H1 (cell line): ENCODE measurements at regions of chr7 and their contacts with region 1.

Region 1: GRCh38 chr7:101153969-101154692 is at the start of gene AP1S1:
- DNase-seq: peak; percentile 98
- H3K4me3 ChIP-seq: peak within 1 kb of the TSS; percentile 48 to 82 (median 66)
- H3K27ac ChIP-seq: peak within 1 kb of the TSS; percentile 16; the same call in 1 of the 2 replicates
- H3K4me1 ChIP-seq: peaks cover 8 to 19% (median 14%) of the 10 kb centered on the region in 4 experiments
- H3K27me3 ChIP-seq: peaks cover 0 to 6% (median 4%) of the 10 kb centered on the region in 4 experiments; a peak in 3 of 7 replicates
- CTCF ChIP-seq: no peak
- EP300 ChIP-seq: no peak
- POLR2A ChIP-seq: no peak
- RAD21 ChIP-seq: no peak
- total RNA-seq, gene AP1S1: 56.0 and 56.1 TPM in 2 replicates

Region 2: GRCh38 chr7:101165075-101165957 is 11.2 kb after region 1 on chr7 and contains the start of gene VGF:
- CTCF ChIA-PET with region 1: interaction called, 38 read pairs
- POLR2A ChIA-PET with region 1: interaction called, 20 read pairs
- DNase-seq: peak; percentile 93 to 98
- H3K4me3 ChIP-seq: peak within 1 kb of the TSS; percentile 46 to 74 (median 55)
- H3K27ac ChIP-seq: no peak within 1 kb of the TSS
- H3K4me1 ChIP-seq: peaks cover 21 to 64% (median 43%) of the 10 kb centered on the region in 4 experiments
- H3K27me3 ChIP-seq: peaks cover 17 to 67% (median 48%) of the 10 kb centered on the region in 4 experiments
- CTCF ChIP-seq: no peak
- EP300 ChIP-seq: peak in 1 of 2 experiments; percentile 79; a peak in 1 of 3 replicates
- POLR2A ChIP-seq: no peak
- RAD21 ChIP-seq: no peak
- total RNA-seq, gene VGF: 7.0 and 7.4 TPM in 2 replicates

Region 3: GRCh38 chr7:101173752-101174244 is 19.7 kb after region 1 on chr7:
- CTCF ChIA-PET with region 1: interaction called, 38 read pairs
- POLR2A ChIA-PET with region 1: interaction called, 20 read pairs
- DNase-seq: peak in 1 of 2 experiments; percentile 98
- H3K4me3 ChIP-seq: peak overlapping the region; percentile 31 to 68 (median 51); a peak in 7 of 8 replicates
- H3K27ac ChIP-seq: no peak overlapping the region
- H3K4me1 ChIP-seq: peaks cover 6 to 48% (median 34%) of the 10 kb centered on the region in 4 experiments
- H3K27me3 ChIP-seq: peaks cover 64 to 99% (median 91%) of the 10 kb centered on the region in 4 experiments
- CTCF ChIP-seq: no peak
- EP300 ChIP-seq: no peak
- POLR2A ChIP-seq: no peak
- RAD21 ChIP-seq: no peak